ENCODE measurements at regions of chr10 and their contacts with region 1.

Region 1: GRCh38 chr10:101012525-101013364 is 13.1 kb downstream of the LZTS2 start:
- DNase-seq: peak; percentile 79
- H3K4me3 ChIP-seq: no peak overlapping the region
- H3K27ac ChIP-seq: no peak overlapping the region
- H3K4me1 ChIP-seq: no peaks in the 10 kb centered on the region
- CTCF ChIP-seq: peak; percentile 93

Region 2: GRCh38 chr10:99834410-99834809 is 1178.3 kb before region 1 on chr10:
- CTCF ChIA-PET with region 1: no interaction called
- POLR2A ChIA-PET with region 1: no interaction called
- intact Hi-C with region 1: loop called (anchors 5 kb)
- DNase-seq: no peak
- H3K4me3 ChIP-seq: no peak overlapping the region
- H3K27ac ChIP-seq: no peak overlapping the region
- H3K4me1 ChIP-seq: no peaks in the 10 kb centered on the region
- CTCF ChIP-seq: no peak

Region 3: DNA sequence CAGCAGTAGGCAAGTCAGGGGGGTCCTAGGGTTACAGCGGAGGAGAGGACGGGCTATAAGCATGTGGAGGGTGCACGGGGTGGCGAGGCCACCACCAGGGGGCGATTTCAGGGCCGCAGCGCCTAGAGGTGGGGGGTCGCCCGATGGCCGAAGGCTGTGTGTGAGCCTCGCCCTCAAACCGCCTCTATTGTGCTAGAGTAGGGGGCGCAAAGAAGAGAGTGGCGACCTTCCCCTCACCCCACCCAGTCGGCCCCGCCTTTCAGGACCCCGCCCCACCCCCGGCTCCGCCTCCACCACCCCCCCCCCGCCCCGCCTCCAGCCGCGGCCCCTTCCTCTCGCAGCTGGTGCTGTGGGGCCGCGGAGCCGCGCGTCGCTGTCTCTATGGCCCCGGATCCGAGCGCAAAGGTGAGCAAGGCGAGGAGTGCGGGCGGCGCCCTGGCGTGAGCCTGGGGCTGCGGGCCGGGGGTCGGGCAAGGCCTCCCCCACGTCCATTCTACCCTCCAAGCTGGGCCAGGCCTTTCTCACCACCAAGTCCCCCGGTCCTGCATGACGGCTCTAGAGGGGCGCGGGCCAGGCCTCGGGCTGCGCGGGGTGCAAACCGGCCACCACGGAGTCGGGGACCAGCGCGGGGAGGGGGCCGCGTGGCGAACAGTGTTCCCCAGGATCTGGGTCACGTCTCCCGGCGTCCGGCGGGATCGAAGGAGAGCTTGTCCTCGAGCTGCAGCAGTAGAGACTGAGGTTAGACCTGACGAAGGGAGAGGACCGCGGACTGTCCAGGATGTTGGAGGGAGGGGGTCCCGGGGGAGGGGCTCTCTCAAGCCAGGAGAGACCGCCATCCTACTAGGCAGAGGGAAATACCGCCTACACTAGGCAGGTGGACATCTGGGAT is 43.3 kb before region 1 on chr10 and contains the start of gene SEMA4G:
- CTCF ChIA-PET with region 1: interaction called, 3 read pairs
- POLR2A ChIA-PET with region 1: interaction called, 5 read pairs
- intact Hi-C with region 1: loop called (anchors 2 kb)
- DNase-seq: peak; percentile 69
- H3K4me3 ChIP-seq: peak within 1 kb of the TSS; percentile 52
- H3K27ac ChIP-seq: no peak within 1 kb of the TSS
- H3K4me1 ChIP-seq: peaks cover 14% of the 10 kb centered on the region
- CTCF ChIP-seq: peak; percentile 77
- total RNA-seq, gene SEMA4G: 0.41 TPM in 1 of 2 replicates, not detected in the other

Region 4: GRCh38 chr10:100998991-100999741 is 13.6 kb before region 1 on chr10:
- CTCF ChIA-PET with region 1: interaction called, 6 read pairs
- POLR2A ChIA-PET with region 1: interaction called, 3 read pairs
- intact Hi-C with region 1: loop called (anchors 1 kb)
- DNase-seq: peak; percentile 80
- H3K4me3 ChIP-seq: peak overlapping the region; percentile 90
- H3K27ac ChIP-seq: peak overlapping the region; percentile 63
- H3K4me1 ChIP-seq: peaks cover 25% of the 10 kb centered on the region
- CTCF ChIP-seq: peak; percentile 86